Posterior vena cava (tissue), 2 donors: ENCODE measurements at regions of chr1 and their contacts with region 1.

Region 1: GRCh38 chr1:184021728-184022127 is 15.8 kb downstream of the COLGALT2 start:
- DNase-seq: no peak

Region 2: GRCh38 chr1:183968386-183968785 is 53.3 kb before region 1 on chr1:
- intact Hi-C with region 1: loop called in 1 of 2 experiments (anchors 5 kb)
- DNase-seq: no peak

Region 3: DNA sequence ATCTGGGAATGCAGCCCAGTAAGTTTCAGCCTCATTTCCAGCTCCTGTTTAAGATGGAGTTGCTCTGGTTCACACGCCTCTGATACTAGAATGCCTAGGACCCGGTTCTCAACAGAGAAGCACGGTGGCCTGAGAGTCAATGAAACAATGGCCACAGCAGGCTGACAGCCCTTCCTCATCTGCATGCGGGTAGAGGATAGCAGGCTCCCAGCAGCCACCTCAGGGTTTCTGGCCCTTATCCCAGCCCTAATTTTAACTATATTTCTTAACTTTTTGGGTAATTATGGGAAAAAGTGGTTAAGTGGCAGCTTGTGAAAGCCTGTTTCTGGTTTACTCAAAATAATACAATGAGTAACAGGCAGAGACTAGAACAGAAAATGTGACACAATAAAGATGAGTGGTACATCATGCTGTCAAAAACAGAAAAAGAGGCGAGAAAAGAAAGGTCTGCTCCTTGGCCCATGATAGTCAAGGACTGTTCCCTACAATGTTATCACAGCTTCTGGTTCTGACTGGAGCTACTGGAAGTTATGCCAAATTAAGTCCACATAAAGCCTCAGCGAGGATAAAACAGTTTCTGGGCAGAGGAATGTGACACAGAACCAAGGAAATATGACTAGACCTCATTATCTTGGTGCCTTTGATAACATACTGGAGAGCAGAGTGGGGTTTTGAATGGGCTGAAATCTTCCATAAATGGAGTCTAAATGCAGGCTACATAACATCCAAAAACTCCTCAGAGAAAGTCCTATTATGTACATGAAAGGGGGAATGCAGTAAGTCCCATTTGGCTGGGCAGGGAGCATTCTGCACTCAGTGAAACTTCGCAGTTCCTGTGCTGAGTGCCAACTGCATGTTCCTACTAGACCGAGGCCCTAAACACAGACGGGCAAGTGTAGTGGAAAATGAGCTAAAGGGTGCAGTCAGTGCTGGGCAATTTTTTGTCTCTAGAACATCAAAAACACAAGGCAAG is 860.5 kb after region 1 on chr1:
- intact Hi-C with region 1: no loop called
- DNase-seq: no peak